Heart left ventricle (tissue), 16 donors: ENCODE measurements at regions of chr3 and their contacts with region 1.

Region 1: DNA sequence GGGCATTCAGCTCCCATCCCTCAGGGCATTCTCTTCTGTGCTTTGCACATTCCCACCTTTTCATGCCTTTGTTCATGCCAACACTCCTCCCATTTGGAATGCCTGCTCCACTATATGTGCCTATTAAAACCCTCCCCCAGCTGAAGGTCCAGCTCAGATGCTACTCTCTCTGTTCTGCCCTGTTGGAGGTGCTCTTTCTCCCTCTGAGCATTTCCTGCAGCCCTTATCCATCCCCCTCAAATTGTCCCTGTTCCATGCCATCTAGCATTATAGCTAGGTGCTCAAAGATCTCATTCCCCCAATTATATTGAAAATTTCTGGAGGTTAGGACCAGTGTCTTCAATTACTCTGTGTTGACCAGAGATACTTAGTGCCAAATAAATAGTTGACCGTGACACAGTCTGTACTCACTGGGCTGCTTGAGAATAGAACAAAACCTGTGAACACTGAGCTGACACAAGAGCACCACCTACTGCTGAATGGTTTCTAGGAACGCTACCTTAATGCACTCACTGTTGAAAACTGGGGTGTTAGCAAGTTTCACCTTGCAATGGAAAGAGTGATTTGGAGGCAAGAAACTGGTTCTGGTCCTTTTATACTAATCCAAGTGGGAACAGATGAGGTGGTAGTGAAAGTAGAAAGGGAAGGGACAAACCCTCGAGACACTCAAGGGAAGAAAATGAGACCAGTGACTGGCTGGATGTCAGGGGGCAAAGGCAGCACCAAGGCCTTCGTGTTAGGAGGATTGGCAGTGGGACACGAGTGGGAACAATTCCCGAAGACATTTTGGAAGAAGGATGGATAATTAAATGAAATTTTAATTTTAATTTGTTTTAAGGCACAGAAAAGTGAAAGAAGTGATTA is 289.8 kb upstream of the ROPN1 start:
- DNase-seq: no peak
- ATAC-seq: peak; percentile 22 to 68 (median 64)
- H3K4me3 ChIP-seq: no peak overlapping the region
- H3K27ac ChIP-seq: peak overlapping the region in 4 of 12 donors; percentile 6 to 80 (median 20)
- H3K4me1 ChIP-seq: peaks cover 8 to 65% (median 36%) of the 10 kb centered on the region in 12 donors
- H3K27me3 ChIP-seq: no peaks in the 10 kb centered on the region
- CTCF ChIP-seq: peak; percentile 47 to 81 (median 68)
- POLR2A ChIP-seq: no peak

Region 2: DNA sequence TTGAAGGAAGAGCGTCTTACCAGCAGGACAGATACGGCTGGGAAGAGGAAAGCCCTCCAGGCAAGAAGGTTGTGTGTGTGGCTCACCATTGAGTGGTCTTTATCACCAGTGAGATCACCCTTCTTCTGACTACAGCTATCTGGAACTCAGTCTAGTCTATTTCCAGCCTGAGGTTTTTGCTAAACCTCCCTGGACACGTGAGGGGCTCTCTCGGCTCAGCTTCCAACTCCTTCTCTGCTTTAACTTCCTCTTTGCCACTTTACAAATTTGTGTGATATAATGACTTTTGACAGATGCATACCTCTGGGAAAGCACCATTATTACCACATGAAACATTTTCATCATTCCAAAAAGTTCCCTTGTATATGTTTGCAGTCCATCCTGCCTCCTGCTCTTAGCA is 274.5 kb before region 1 on chr3:
- intact Hi-C with region 1: loop called in 1 of 10 experiments (anchors 2 kb)
- DNase-seq: no peak
- ATAC-seq: no peak
- H3K4me3 ChIP-seq: no peak overlapping the region
- H3K27ac ChIP-seq: no peak overlapping the region
- H3K4me1 ChIP-seq: peaks cover 0 to 4% (median 0%) of the 10 kb centered on the region in 12 donors
- H3K27me3 ChIP-seq: peaks cover 0 to 6% (median 0%) of the 10 kb centered on the region in 9 donors
- CTCF ChIP-seq: no peak
- POLR2A ChIP-seq: no peak

Region 3: GRCh38 chr3:124032648-124033359 is 248.9 kb before region 1 on chr3:
- intact Hi-C with region 1: loop called in 8 of 10 experiments (anchors 2 to 10 kb)
- DNase-seq: peak; percentile 88 to 92 (median 90)
- ATAC-seq: peak; percentile 79 to 96 (median 93)
- H3K4me3 ChIP-seq: peak overlapping the region; percentile 62 to 92 (median 85)
- H3K27ac ChIP-seq: peak overlapping the region; percentile 80 to 98 (median 94)
- H3K4me1 ChIP-seq: peaks cover 0 to 34% (median 9%) of the 10 kb centered on the region in 12 donors
- H3K27me3 ChIP-seq: peaks cover 0 to 57% (median 0%) of the 10 kb centered on the region in 9 donors
- CTCF ChIP-seq: peak; percentile 61 to 88 (median 76)
- POLR2A ChIP-seq: no peak

Region 4: DNA sequence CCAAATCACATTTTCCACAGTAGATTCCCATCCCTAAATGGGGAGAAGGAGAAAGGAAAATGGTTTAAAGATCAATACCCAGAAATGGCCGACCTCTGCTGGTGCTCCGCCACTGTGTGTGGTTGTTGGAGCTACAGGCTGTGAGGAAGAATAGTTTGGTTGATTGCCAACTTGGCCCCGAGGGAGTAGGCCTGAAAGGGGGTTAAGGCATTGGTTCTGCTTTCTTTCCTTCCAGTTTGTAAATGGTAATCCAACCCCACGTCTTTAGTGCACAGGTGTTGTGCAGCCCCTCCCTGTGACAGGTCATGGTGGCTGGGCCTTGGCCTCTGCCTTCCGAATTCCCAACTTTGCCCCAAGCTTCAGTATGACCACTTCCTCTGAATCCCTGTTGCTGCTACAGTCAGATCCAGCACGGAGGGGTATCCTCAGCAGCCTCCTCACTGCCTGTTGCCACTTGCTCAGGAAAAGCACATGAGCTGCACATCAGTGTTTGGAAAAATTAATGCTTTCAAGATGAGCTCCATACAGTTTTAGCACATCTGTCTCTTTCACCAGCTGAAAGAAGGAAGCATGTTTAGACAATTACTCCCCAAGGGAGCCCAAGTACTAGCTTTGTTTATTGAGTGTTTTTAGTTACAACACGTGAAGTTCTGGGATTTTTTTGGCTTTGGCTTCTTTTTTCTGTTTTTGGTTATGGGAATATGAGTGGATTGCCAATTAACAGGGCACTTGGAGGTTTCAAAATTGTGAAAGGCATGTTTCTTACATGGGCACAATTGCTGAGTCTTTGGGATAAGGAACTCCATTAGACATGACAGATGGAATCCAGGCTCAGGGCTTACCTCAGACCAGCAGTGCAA is 197.4 kb before region 1 on chr3:
- intact Hi-C with region 1: loop called (anchors 2 to 5 kb)
- DNase-seq: peak in 4 of 5 donors; percentile 27 to 43 (median 36)
- ATAC-seq: peak in 3 of 4 donors; percentile 30 to 64 (median 48)
- H3K4me3 ChIP-seq: no peak overlapping the region
- H3K27ac ChIP-seq: peak overlapping the region in 7 of 12 donors; percentile 0 to 53 (median 18)
- H3K4me1 ChIP-seq: peaks cover 0 to 41% (median 13%) of the 10 kb centered on the region in 12 donors
- H3K27me3 ChIP-seq: no peaks in the 10 kb centered on the region
- CTCF ChIP-seq: no peak
- POLR2A ChIP-seq: no peak

Region 5: GRCh38 chr3:124168262-124168661 is 113.4 kb before region 1 on chr3:
- intact Hi-C with region 1: no loop called
- DNase-seq: no peak
- ATAC-seq: peak; percentile 40 to 84 (median 80)
- H3K4me3 ChIP-seq: no peak overlapping the region
- H3K27ac ChIP-seq: no peak overlapping the region
- H3K4me1 ChIP-seq: peaks cover 0 to 29% (median 5%) of the 10 kb centered on the region in 12 donors
- H3K27me3 ChIP-seq: no peaks in the 10 kb centered on the region
- CTCF ChIP-seq: no peak
- POLR2A ChIP-seq: no peak

Region 6: DNA sequence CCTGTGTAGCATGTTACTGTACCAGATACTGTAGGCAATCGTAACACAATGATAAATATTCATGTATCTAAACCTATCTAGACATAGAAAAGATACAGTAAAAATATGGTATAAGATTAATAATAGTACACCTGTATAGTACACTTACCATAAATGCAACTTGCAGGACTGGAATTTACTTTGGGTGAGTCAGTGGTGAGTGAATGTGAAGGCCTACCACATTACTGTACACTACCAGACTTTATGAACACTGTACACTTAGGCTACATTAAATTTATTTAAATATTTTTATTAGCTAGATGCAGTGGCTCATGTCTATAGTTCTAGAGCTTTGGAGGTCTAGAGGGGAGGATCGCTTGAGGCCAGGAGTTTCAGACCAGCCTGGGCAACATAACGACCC is 103.2 kb before region 1 on chr3:
- intact Hi-C with region 1: no loop called
- DNase-seq: no peak
- ATAC-seq: no peak
- H3K4me3 ChIP-seq: no peak overlapping the region
- H3K27ac ChIP-seq: no peak overlapping the region
- H3K4me1 ChIP-seq: peaks cover 0 to 17% (median 5%) of the 10 kb centered on the region in 12 donors
- H3K27me3 ChIP-seq: no peaks in the 10 kb centered on the region
- CTCF ChIP-seq: no peak
- POLR2A ChIP-seq: no peak

Region 7: GRCh38 chr3:124230998-124231397 is 50.7 kb before region 1 on chr3:
- intact Hi-C with region 1: loop called in 1 of 10 experiments (anchors 5 kb)
- DNase-seq: no peak
- ATAC-seq: no peak
- H3K4me3 ChIP-seq: no peak overlapping the region
- H3K27ac ChIP-seq: no peak overlapping the region
- H3K4me1 ChIP-seq: peaks cover 0 to 12% (median 0%) of the 10 kb centered on the region in 12 donors
- H3K27me3 ChIP-seq: no peaks in the 10 kb centered on the region
- CTCF ChIP-seq: no peak
- POLR2A ChIP-seq: no peak